ENCODE measurements at regions of chr2 and their contacts with region 1.

Region 1: DNA sequence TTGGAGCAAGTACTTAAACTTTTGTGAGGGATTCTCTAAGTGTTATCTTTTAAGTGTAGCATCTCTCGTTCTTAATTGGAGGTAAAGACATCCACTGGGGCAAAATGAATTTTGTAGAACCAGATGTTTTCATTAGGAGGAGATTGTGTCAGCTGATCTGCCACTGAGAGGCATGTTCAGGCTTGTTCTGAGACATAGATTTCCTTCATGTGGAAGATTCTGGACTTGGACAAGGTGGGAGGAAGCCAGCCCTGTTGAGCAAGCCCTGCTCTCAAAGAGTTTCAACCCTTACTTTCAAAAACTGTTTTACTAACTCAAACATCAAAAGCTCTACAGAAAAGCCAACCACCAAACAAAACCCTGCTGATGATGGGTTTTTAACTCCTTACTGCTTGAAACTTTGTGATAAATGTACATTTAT is 6.5 kb downstream of the MAP4K4 start:
- DNase-seq: no peak
- ATAC-seq: peak; percentile 14
- H3K4me3 ChIP-seq: no peak overlapping the region
- H3K27ac ChIP-seq: no peak overlapping the region
- H3K4me1 ChIP-seq: peaks cover 15% of the 10 kb centered on the region
- H3K27me3 ChIP-seq: peaks cover 0 to 6% of the 10 kb centered on the region in 2 experiments; a peak in 1 of 4 replicates
- CTCF ChIP-seq: no peak
- EP300 ChIP-seq: no peak
- POLR2A ChIP-seq: no peak
- RAD21 ChIP-seq: no peak

Region 2: GRCh38 chr2:101361121-101361870 is 342.8 kb before region 1 on chr2:
- CTCF ChIA-PET with region 1: no interaction called
- POLR2A ChIA-PET with region 1: no interaction called
- RAD21 ChIA-PET with region 1: no interaction called
- SMC1A ChIA-PET with region 1: no interaction called
- in situ Hi-C with region 1: no loop called
- intact Hi-C with region 1: no loop called
- DNase-seq: no peak
- ATAC-seq: peak; percentile 81
- H3K4me3 ChIP-seq: no peak overlapping the region
- H3K27ac ChIP-seq: no peak overlapping the region
- H3K4me1 ChIP-seq: no peaks in the 10 kb centered on the region
- H3K27me3 ChIP-seq: peaks cover 0 to 4% of the 10 kb centered on the region in 2 experiments; a peak in 1 of 4 replicates
- CTCF ChIP-seq: no peak
- EP300 ChIP-seq: no peak
- POLR2A ChIP-seq: no peak
- RAD21 ChIP-seq: no peak

Region 3: DNA sequence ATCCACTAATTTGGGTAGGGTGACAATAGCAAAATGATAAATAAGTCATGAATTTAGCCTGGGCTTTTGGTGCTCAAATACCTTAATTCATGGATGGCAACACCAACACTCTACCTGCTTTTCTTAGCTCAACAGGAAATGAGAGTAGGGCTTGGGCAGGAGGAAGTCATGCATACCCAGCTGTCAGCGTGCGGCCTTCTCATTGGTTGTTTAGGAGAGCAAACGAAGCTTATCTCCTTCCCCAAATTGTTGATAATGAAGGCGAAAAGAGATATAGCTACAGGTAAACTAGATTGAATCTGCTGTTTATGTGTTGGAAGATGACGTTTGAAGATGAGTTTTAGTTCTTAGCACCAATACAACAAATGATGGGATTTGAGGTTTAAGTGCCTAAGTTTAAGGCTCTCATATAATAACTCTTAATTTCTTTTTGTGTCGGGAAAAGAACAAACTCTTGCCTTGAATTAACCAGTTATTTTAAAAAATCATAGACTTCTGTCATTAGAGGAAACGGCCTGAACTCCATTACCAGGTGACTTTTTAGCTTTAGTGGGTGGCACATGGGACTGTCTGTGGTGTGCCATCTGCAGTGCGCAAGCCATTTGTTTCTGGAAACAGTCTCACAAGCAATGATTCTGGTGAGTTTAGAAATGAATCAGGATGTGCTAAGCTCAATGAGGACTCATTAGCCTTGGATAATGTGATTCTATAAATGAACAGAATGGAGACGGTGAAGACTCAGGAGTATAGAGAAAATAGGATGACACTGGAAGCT is 13.2 kb after region 1 on chr2:
- CTCF ChIA-PET with region 1: interaction called, 5 read pairs
- POLR2A ChIA-PET with region 1: interaction called, 5 read pairs
- RAD21 ChIA-PET with region 1: interaction called, 11 read pairs
- SMC1A ChIA-PET with region 1: interaction called, 25 read pairs
- in situ Hi-C with region 1: no loop called
- intact Hi-C with region 1: no loop called
- DNase-seq: peak; percentile 44
- ATAC-seq: peak; percentile 84
- H3K4me3 ChIP-seq: 0 out of 2 replicates have a peak overlapping the region, but pooled peaks have one; percentile 10
- H3K27ac ChIP-seq: no peak overlapping the region; the same call in 1 of the 2 replicates
- H3K4me1 ChIP-seq: peaks cover 21% of the 10 kb centered on the region
- H3K27me3 ChIP-seq: no peaks in the 10 kb centered on the region; a peak in 1 of 4 replicates
- CTCF ChIP-seq: no peak
- EP300 ChIP-seq: no peak
- POLR2A ChIP-seq: no peak
- RAD21 ChIP-seq: no peak

Region 4: GRCh38 chr2:101725515-101726192 is 21.6 kb after region 1 on chr2:
- CTCF ChIA-PET with region 1: interaction called, 8 read pairs
- POLR2A ChIA-PET with region 1: interaction called, 5 read pairs
- RAD21 ChIA-PET with region 1: interaction called, 8 read pairs
- SMC1A ChIA-PET with region 1: interaction called, 14 read pairs
- in situ Hi-C with region 1: no loop called
- intact Hi-C with region 1: no loop called
- DNase-seq: no peak
- ATAC-seq: 0 out of 3 replicates have a peak, but pooled peaks have one; percentile 15
- H3K4me3 ChIP-seq: no peak overlapping the region
- H3K27ac ChIP-seq: no peak overlapping the region
- H3K4me1 ChIP-seq: no peaks in the 10 kb centered on the region
- H3K27me3 ChIP-seq: no peaks in the 10 kb centered on the region; a peak in 1 of 4 replicates
- CTCF ChIP-seq: peak; percentile 21 to 46 (median 28); a peak in 5 of 6 replicates
- EP300 ChIP-seq: no peak
- POLR2A ChIP-seq: no peak
- RAD21 ChIP-seq: peak; percentile 58

Measured in GM12878 (cell line).